ENCODE measurements at regions of chr11 and their contacts with region 1.

Region 1: DNA sequence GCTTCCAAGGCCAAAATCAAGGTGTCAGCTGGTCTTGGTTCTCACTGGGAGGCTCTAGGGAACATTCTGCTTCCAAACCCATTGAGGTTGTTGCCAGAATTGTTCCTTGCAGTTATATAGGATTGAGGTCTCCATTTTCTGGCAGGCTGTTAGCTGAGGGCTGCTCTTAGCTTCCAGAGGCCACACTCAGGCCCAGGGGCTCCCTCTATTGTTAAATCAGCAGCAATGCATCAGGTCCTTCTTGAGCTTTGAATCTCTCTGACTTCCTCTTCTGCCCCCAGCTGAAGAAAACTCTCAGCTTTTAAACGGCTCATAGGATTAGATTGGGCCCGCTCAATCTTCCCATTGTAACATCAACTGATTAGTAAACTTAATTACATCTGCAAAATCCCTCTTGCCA is 39.3 kb upstream of the BSX start:
- H3K4me3 Mint-ChIP-seq: no peak overlapping the region
- H3K27ac Mint-ChIP-seq: no peak overlapping the region
- H3K4me1 Mint-ChIP-seq: peaks cover 12% of the 10 kb centered on the region
- H3K27me3 Mint-ChIP-seq: peaks cover 15% of the 10 kb centered on the region

Region 2: DNA sequence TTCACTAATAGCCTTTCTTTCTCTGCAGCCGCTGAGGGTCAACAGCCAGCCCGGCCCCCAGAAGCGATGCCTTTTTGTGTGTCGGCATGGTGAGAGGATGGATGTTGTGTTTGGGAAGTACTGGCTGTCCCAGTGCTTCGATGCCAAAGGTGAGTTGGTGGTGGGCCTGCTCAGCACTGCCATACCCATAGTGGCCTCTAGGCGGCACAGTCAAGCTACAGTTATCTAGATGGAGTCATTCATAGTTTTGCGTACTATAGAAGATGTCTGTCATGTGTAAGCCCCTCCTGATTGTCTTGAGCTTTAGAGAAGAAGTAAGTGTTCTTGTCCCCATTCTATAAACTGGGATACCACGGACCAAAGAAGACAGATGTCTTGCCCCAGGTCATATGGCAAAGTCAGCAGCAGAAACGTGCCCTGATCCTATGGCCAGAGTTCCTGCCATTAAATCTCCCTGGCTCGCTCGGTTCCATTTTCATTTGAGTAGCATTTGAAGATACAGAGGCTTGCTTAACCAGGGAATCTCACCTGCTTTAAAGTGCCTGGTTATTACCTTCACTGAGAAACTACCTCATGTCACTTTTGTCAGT is 224.7 kb before region 1 on chr11:
- intact Hi-C with region 1: loop called (anchors 5 kb)
- H3K4me3 Mint-ChIP-seq: no peak overlapping the region
- H3K27ac Mint-ChIP-seq: no peak overlapping the region
- H3K4me1 Mint-ChIP-seq: peaks cover 18% of the 10 kb centered on the region
- H3K27me3 Mint-ChIP-seq: no peaks in the 10 kb centered on the region

Region 3: DNA sequence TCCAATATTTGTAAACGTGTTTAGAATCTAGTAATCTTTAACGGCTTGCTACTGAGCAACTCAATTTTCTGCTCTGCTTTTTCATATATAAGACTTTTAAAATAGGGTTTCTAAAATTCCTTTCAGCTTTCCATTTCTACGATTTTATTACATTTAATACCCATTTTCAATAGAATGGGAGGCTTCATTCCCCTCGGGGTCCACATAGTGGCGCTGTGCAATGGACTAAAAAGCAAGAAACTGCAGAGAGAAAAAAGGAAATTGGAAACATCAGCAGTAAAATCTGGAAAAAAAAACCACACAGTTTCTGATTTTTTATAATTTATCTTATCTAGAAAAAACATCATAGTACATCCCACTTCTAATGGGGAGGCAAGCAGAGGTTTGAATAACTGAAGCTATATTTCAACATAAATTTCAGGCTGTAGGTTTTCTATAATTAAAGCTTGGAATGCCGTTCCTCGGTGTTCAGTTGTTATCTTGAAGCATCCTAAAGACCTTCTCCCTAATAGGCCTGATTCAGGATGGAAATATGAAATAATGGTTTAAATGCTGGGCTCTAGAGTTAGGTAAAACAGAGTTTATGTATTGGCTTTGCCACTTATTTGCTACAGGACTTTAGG is 157.2 kb before region 1 on chr11:
- intact Hi-C with region 1: loop called (anchors 1 kb)
- H3K4me3 Mint-ChIP-seq: no peak overlapping the region
- H3K27ac Mint-ChIP-seq: no peak overlapping the region
- H3K4me1 Mint-ChIP-seq: peaks cover 22% of the 10 kb centered on the region
- H3K27me3 Mint-ChIP-seq: peaks cover 4% of the 10 kb centered on the region